Esophagus muscularis mucosa (tissue), 4 donors: ENCODE measurements at regions of chr12 and their contacts with region 1.

Region 1: DNA sequence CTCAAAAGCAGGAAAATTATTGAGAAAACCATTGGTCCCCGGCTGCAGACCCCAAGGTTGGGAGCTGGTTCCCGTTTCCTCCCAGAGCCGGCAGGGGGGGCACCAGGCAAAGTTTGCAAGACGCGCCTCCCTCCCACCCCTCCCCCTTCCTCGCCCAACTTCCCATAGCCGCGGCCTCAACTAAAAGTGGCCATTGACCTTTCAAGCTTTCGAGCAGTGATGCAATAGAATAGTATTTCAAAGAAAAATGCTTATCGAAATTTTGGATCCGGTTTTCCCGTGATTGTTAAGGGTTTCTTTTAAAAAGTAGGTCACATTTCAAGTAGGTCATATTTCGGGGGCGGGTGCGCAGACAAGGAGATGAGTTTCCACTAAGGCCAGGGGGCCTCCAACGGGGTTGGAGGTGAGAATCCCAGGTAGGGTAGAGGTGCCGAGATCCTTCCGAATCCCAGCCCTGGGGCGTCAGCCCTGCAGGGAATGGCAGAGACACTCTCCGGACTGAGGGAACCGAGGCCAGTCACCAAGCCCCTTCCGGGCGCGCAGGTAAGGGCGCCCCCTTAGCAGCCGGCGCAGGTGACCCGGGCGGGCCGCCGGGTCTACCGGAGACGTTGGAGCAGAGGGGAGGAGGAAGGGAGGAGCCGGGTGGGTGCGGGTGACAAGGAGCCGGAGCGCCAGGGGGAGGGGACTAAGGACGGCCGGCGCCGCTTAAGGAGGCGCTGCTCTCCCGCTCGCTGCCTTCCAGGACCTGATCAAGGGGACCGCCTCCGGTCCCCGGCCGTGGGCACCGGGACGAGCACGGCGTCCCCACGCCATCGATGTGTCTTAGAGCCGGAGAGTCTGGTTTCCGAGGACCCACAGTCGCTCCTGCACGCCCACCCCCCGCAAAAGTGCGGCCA is 2.6 kb upstream of the SOCS2 start:
- DNase-seq: peak; percentile 97
- H3K4me3 ChIP-seq: peak overlapping the region; percentile 71 to 90 (median 78)
- H3K27ac ChIP-seq: peak overlapping the region; percentile 91 to 95 (median 92)
- H3K4me1 ChIP-seq: peaks cover 3 to 44% (median 23%) of the 10 kb centered on the region in 4 donors
- H3K27me3 ChIP-seq: peaks cover 0 to 16% (median 0%) of the 10 kb centered on the region in 4 donors
- CTCF ChIP-seq: peak; percentile 87 to 89 (median 88)
- EP300 ChIP-seq: no peak
- POLR2A ChIP-seq: no peak

Region 2: DNA sequence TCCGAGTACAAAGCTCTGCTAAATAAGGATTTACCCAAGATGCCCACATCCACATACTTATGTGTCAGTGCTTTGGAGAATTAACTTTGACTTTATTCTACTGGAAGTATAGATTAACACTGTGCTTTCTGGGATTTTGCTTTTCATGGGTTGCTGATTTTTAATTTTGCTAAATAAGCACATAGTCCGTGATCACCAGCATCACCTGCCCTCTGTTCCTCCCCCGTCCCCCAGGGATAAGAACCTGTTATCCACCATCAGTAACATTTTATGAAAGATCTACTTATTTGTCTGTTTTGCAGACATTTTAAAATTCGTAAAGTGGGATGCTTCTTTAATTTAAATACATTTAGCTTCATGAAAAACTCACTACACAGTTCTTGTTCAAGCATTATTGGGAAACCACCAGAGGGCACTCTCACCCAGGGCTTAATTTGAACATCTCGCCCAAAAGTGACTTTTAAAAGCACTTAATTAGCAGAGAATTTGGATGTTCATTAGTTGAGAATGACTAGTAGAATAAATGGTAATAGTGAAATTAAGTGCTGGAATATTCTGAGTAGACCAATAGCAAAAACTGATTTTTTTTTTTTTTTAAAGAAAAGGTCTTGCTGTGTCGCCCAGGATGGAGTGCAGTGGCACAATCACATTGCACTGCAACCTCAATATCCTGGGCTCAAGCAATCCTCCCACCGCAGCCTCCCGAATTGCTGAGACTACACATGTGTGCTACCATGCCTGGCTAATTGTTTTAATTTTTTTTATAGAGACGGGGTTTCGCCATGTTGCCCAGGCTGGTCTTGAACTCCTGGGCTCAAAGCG is 66.9 kb before region 1 on chr12:
- intact Hi-C with region 1: loop called (anchors 10 kb)
- DNase-seq: no peak
- H3K4me3 ChIP-seq: no peak overlapping the region
- H3K27ac ChIP-seq: no peak overlapping the region
- H3K4me1 ChIP-seq: no peaks in the 10 kb centered on the region
- H3K27me3 ChIP-seq: no peaks in the 10 kb centered on the region
- CTCF ChIP-seq: peak; percentile 63 to 83 (median 77)
- EP300 ChIP-seq: no peak
- POLR2A ChIP-seq: no peak

Region 3: GRCh38 chr12:93742110-93742934 is 172.4 kb after region 1 on chr12:
- intact Hi-C with region 1: loop called (anchors 2 kb)
- DNase-seq: no peak
- H3K4me3 ChIP-seq: peak overlapping the region; percentile 57 to 67 (median 66)
- H3K27ac ChIP-seq: peak overlapping the region; percentile 82 to 89 (median 88)
- H3K4me1 ChIP-seq: peaks cover 31 to 63% (median 59%) of the 10 kb centered on the region in 4 donors
- H3K27me3 ChIP-seq: no peaks in the 10 kb centered on the region
- CTCF ChIP-seq: peak in 2 of 3 experiments; percentile 46 to 64
- EP300 ChIP-seq: peak; percentile 92
- POLR2A ChIP-seq: no peak

Region 4: GRCh38 chr12:93844164-93844784 is 274.4 kb after region 1 on chr12:
- intact Hi-C with region 1: loop called (anchors 5 kb)
- DNase-seq: peak; percentile 62
- H3K4me3 ChIP-seq: no peak overlapping the region
- H3K27ac ChIP-seq: no peak overlapping the region
- H3K4me1 ChIP-seq: peaks cover 0 to 9% (median 7%) of the 10 kb centered on the region in 4 donors
- H3K27me3 ChIP-seq: no peaks in the 10 kb centered on the region
- CTCF ChIP-seq: no peak
- EP300 ChIP-seq: no peak
- POLR2A ChIP-seq: no peak

Region 5: GRCh38 chr12:94101738-94102660 is 532.1 kb after region 1 on chr12:
- intact Hi-C with region 1: loop called (anchors 1 kb)
- DNase-seq: peak; percentile 98
- H3K4me3 ChIP-seq: peak overlapping the region; percentile 58 to 82 (median 64)
- H3K27ac ChIP-seq: peak overlapping the region; percentile 22 to 60 (median 56)
- H3K4me1 ChIP-seq: peaks cover 13 to 17% (median 15%) of the 10 kb centered on the region in 4 donors
- H3K27me3 ChIP-seq: peaks cover 0 to 15% (median 0%) of the 10 kb centered on the region in 4 donors
- CTCF ChIP-seq: peak; percentile 83 to 88 (median 87)
- EP300 ChIP-seq: no peak
- POLR2A ChIP-seq: no peak